AG04449 (cell line): ENCODE measurements at regions of chr10 and their contacts with region 1.

Region 1: GRCh38 chr10:68792115-68792514 is 35.2 kb upstream of the STOX1 start:
- DNase-seq: no peak
- H3K4me3 ChIP-seq: no peak overlapping the region
- CTCF ChIP-seq: no peak

Region 2: DNA sequence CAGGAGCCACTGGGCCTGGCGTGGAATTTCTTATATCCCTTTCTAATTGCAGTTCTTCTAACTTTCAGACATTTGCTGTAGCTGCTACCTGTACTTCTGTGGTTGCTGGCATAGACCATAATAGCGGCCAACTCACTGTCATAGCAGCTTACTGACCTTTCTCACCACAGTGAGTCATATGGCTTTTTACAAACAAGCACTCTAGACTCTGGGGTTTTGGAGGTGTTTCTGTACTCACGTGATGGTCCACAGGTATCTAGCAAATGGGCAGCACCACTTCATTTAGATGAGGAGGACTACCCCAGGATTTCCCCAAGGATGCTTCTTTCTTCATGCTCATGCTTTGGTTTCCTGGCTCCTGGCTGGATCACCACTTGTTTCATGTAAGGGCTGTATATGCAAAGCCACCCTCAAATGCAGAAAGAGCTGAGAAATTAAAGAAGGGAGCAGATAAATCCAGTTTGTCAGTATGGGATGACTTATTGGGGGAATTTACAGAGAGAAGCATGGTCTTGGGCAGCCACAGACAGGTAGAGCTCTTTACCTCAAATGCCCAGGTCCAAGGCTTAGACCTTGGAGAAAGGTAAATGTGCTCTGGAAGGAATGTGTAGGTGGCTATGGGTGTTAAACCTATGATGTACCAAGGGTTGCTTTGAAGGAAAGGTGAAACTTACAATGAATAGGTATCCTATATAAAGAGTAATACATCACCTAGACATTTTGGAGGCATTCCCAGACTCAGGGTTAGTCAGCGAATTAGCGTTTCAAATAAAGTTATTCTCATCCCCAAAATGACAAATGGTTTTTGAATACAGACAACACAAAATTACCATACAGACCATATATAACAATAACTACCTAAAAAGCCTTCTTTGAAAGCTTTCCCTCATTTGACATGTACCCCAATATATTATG is 248.9 kb before region 1 on chr10:
- CTCF ChIA-PET with region 1: no interaction called
- POLR2A ChIA-PET with region 1: no interaction called
- DNase-seq: no peak
- H3K4me3 ChIP-seq: no peak overlapping the region
- CTCF ChIP-seq: no peak

Region 3: GRCh38 chr10:68897336-68897741 is 105.2 kb after region 1 on chr10:
- CTCF ChIA-PET with region 1: interaction called, 39 read pairs
- POLR2A ChIA-PET with region 1: interaction called, 4 read pairs
- DNase-seq: peak; percentile 28
- H3K4me3 ChIP-seq: no peak overlapping the region
- CTCF ChIP-seq: peak; percentile 51